ENCODE measurements at regions of chr4 and their contacts with region 1.

Region 1: DNA sequence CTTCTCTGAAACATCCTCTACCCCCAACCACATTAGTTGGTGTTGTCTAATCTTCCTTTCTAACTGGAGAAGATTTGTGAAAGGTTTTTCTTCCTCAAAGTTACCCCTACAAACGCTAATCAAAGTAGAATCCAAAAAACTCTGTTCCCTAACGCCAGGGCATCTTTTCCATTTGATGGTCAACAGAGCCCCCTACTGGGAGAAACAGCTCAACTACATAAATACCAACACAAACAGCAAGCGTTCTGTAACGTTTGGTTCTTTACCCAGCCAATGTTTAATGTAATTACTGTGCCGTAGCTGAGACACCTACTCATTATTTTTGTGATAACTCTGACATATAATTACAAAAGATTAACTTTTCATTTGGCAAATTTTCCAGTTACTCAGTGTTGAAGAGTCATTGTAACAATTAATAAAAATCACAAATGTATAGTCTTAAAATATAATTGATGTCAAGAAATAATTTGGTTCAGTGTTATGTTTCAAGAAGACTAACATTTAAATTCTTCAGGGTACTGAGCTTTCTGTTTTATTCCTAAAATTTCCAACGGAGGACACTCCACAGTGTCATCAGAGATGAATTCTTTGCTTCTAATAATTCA is 94.9 kb upstream of the TBC1D9 start:
- DNase-seq: no peak
- ATAC-seq: peak; percentile 62

Region 2: GRCh38 chr4:140359562-140360427 is 491.3 kb before region 1 on chr4:
- intact Hi-C with region 1: loop called (anchors 5 kb)
- DNase-seq: no peak
- ATAC-seq: peak; percentile 73

Region 3: DNA sequence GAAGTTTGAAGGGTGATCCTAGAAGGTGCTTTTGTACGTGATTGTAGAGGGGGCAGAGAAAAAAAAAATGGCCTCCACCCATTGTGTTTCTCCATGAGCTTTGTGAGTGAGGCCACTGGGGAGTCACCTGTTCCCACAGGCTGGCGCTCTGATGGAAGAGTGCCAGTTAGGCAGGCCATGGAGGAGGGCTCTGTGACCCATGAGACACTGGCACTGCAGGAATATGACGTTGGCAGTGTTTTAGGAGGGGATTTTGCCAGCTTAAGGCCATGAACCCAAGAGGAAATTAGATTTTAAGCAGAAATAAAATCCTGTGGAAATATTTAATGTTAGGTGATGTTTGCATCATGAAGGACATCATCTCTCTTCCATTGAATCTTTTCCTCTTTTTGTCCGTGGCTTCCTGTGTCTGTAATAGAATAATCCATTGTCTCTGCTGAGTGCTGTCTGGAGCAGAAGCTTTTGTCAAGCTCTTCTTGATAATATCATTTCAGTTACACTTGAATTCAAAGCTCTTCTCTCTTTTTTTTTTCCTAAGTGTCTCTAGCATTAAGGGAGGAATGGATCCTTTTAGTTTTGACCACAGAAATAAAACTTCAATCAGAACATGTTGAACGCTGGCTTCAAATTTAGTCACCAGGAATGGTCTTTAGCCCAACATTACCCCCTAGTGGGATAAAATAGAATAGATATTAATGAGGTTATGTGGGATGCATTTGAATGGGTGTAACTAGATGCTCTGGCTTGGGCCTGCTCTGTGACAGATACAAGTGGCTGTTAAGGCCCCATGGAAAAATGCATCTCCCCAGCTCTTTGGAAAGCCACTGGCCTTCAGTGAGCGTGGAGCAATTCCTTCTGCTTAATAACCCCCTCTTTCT is 241.3 kb before region 1 on chr4:
- intact Hi-C with region 1: loop called (anchors 5 kb)
- DNase-seq: no peak
- ATAC-seq: peak; percentile 76

Region 4: GRCh38 chr4:140637836-140638235 is 213.3 kb before region 1 on chr4:
- intact Hi-C with region 1: loop called (anchors 10 kb)
- DNase-seq: no peak
- ATAC-seq: peak; percentile 42

Region 5: DNA sequence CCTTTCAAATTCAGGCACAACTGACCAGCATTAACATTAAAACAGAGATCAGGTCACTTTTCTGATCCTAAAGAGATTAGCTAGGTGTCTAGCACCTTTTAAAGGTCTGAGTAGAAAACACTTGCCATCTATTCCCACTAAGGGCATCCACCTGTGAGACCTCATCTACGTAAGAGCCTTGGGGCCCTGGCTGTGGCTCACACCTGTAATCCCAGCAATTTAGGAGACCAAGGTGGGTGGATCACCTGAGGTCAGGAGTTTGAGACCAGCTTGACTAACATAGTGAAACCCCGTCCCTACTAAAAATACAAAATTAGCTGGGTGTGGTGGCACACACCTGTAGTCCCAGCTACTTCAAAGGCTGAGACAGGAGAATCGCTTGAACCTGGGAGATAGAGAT is 106.7 kb before region 1 on chr4:
- intact Hi-C with region 1: no loop called
- DNase-seq: no peak
- ATAC-seq: no peak

Region 6: DNA sequence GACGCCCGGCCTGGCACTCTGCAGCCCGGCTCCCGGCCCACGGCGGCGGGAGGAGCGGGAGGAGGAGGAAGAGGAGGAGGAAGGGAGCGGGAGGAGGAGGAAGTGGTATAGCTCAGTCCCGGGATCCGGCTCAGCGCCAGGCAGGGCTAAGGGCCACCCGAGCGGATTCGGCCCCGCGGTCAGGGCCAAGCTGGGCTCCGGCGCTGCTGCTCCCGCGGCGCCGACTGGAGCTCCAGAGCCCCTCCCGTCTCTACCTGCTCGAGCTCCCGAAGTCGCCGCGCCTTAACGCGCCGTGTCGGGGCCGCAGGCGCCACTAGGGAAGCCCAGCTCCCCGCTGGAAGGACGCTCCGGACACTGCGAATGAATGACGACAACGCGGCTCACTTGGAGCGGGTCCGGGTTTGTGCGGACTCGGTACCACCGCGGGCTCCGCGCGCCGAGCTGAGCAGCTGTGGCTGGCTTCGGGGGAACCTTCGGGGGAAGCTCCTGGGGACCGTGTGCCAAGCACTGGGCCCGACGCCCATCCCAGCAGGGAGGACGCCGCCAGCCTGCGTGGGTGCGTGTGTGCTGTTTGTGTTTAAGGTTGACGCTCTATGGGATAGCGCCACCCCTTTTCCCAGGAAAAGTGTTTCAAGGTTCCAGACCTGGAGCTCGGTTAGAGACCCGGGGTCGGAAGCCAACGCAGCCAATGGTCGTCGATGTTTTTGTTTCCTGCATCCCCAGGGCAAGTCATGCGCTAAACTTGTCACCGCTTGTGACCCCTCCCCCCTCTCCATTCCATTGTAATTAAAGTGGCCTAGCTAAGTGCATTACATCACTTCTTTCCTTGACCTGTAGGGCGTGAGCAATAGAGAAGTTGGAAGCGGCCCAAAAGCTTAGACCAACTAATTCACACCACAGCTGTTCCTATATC is 94.6 kb before region 1 on chr4 and contains the start of gene TBC1D9:
- intact Hi-C with region 1: loop called (anchors 5 kb)
- DNase-seq: peak; percentile 91
- ATAC-seq: peak; percentile 84
- total RNA-seq, gene TBC1D9: 11.1 TPM

Measured in Right ventricle myocardium inferior (tissue), 1 donor.